T-cell (primary cell): ENCODE measurements at regions of chr3 and their contacts with region 1.

Region 1: GRCh38 chr3:100869787-100870186 is 123.4 kb downstream of the ABI3BP start:
- DNase-seq: no peak
- ATAC-seq: no peak
- H3K4me3 ChIP-seq: no peak overlapping the region
- H3K4me3 Mint-ChIP-seq: no peak overlapping the region
- H3K27ac ChIP-seq: no peak overlapping the region
- H3K27ac Mint-ChIP-seq: no peak overlapping the region
- H3K4me1 ChIP-seq: no peaks in the 10 kb centered on the region
- H3K4me1 Mint-ChIP-seq: no peaks in the 10 kb centered on the region
- H3K27me3 ChIP-seq: no peaks in the 10 kb centered on the region
- H3K27me3 Mint-ChIP-seq: peaks cover 17 to 31% of the 10 kb centered on the region in 2 donors

Region 2: DNA sequence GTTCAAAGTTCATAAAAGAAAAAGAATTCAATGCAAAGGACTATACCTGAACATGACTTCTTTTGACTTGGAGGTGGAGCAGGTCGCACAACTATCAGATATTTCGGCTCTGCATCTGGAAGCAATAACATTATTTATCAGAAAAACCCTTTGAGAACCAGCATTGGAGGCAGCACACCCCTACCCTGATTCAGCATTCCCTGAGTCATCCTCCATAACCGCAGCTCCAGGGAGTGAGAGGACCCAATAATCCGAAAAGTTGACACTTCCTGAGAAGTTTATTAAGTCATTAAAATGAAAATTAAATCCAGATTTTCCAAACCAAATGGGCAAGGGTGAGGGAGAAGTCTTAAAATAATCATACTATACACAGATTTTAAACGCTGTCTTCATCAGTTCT is 32.8 kb after region 1 on chr3:
- CTCF ChIA-PET with region 1: interaction called in 1 of 2 experiments, 13 read pairs
- POLR2A ChIA-PET with region 1: no interaction called
- DNase-seq: no peak
- ATAC-seq: no peak
- H3K4me3 ChIP-seq: no peak overlapping the region
- H3K4me3 Mint-ChIP-seq: no peak overlapping the region
- H3K27ac ChIP-seq: no peak overlapping the region
- H3K27ac Mint-ChIP-seq: no peak overlapping the region
- H3K4me1 ChIP-seq: no peaks in the 10 kb centered on the region
- H3K4me1 Mint-ChIP-seq: peaks cover 0 to 13% (median 9%) of the 10 kb centered on the region in 3 donors
- H3K27me3 ChIP-seq: no peaks in the 10 kb centered on the region
- H3K27me3 Mint-ChIP-seq: peaks cover 5 to 7% of the 10 kb centered on the region in 2 donors

Region 3: GRCh38 chr3:101262393-101263240 is 392.8 kb after region 1 on chr3:
- CTCF ChIA-PET with region 1: no interaction called
- POLR2A ChIA-PET with region 1: no interaction called
- DNase-seq: no peak
- ATAC-seq: no peak
- H3K4me3 ChIP-seq: no peak overlapping the region
- H3K4me3 Mint-ChIP-seq: no peak overlapping the region
- H3K27ac ChIP-seq: no peak overlapping the region
- H3K27ac Mint-ChIP-seq: no peak overlapping the region
- H3K4me1 ChIP-seq: no peaks in the 10 kb centered on the region
- H3K4me1 Mint-ChIP-seq: peaks cover 0 to 2% (median 0%) of the 10 kb centered on the region in 3 donors
- H3K27me3 ChIP-seq: no peaks in the 10 kb centered on the region
- H3K27me3 Mint-ChIP-seq: no peaks in the 10 kb centered on the region